IMR-90 (cell line): ENCODE measurements at regions of chr5 and their contacts with region 1.

Region 1: DNA sequence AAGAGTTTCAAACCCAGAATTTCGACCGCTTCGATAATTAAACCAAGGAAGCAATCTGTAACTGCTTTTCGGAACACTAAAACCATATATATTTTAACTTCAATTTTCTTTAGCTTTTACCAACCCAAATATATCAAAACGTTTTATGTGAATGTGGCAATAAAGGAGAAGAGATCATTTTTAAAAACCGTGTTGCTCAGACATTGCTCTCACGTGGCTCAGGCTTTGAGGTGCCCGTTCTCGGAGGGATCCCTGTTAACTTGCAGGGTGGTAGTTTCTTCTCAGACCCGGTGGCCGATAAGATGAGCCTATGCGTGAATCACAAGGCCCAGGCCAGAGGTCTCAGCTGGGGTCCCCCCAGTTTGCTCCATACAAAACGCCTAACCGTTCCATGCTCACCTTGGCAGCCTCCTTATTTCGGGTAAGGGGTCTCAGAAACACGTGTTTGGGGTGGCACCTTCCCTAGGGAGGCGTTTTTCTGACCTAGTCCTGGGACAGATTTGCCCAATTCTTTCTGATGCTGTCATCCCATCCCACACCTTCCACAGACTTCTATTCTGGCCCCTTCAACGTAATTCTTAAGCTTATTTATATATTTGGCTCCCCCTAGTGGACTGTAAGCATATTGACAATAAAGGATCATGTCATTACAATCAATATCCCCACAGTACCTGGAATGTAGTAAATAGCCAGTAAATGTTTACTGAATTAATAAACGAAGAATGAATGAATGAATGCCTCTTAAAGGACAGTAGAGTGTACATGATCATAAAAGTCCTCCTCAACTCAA is 48.1 kb downstream of the THBS4 start:
- DNase-seq: peak; percentile 72
- ATAC-seq: peak; percentile 83
- H3K4me3 ChIP-seq: no peak overlapping the region
- H3K27ac ChIP-seq: no peak overlapping the region
- H3K4me1 ChIP-seq: peaks cover 3% of the 10 kb centered on the region; the same call in 1 of the 2 replicates
- H3K27me3 ChIP-seq: peaks cover 2% of the 10 kb centered on the region; the same call in 1 of the 2 replicates
- CTCF ChIP-seq: peak; percentile 80
- POLR2A ChIP-seq: no peak
- RAD21 ChIP-seq: peak; percentile 69

Region 2: GRCh38 chr5:78908173-78909061 is 1174.9 kb before region 1 on chr5:
- CTCF ChIA-PET with region 1: no interaction called
- POLR2A ChIA-PET with region 1: no interaction called
- dilution Hi-C with region 1: no loop called
- in situ Hi-C with region 1: no loop called
- intact Hi-C with region 1: loop called (anchors 5 kb)
- DNase-seq: peak; percentile 91
- ATAC-seq: peak; percentile 40
- H3K4me3 ChIP-seq: peak overlapping the region; percentile 2; the same call in 1 of the 2 replicates
- H3K27ac ChIP-seq: peak overlapping the region; percentile 91
- H3K4me1 ChIP-seq: peaks cover 17% of the 10 kb centered on the region
- H3K27me3 ChIP-seq: no peaks in the 10 kb centered on the region
- CTCF ChIP-seq: no peak
- POLR2A ChIP-seq: no peak
- RAD21 ChIP-seq: no peak

Region 3: DNA sequence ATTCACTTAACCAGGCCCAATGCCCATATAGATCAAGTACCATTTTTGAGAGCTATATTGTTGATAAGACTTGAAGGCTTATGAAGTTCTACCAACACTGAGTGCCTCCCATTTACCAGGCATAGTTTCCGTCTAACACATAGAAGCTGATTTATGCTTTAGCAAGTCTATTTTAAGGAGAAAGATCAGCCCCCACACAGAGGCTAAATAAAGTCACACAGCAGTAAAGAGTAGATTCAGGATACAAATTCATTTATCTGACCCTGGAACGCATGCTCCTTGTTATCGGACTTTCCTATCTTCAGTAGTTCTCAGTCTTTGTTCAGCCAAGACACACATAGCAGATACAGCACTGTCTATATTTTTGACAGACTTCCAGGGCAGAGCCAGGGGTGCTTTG is 1048.1 kb before region 1 on chr5:
- CTCF ChIA-PET with region 1: no interaction called
- POLR2A ChIA-PET with region 1: no interaction called
- dilution Hi-C with region 1: no loop called
- in situ Hi-C with region 1: no loop called
- intact Hi-C with region 1: no loop called
- DNase-seq: no peak
- ATAC-seq: no peak
- H3K4me3 ChIP-seq: no peak overlapping the region
- H3K27ac ChIP-seq: no peak overlapping the region
- H3K4me1 ChIP-seq: no peaks in the 10 kb centered on the region
- H3K27me3 ChIP-seq: no peaks in the 10 kb centered on the region
- CTCF ChIP-seq: no peak
- POLR2A ChIP-seq: no peak
- RAD21 ChIP-seq: no peak

Region 4: GRCh38 chr5:79552984-79553383 is 530.3 kb before region 1 on chr5:
- CTCF ChIA-PET with region 1: no interaction called
- POLR2A ChIA-PET with region 1: no interaction called
- dilution Hi-C with region 1: no loop called
- in situ Hi-C with region 1: loop called (anchors 5 kb)
- intact Hi-C with region 1: no loop called
- DNase-seq: peak; percentile 46
- ATAC-seq: no peak
- H3K4me3 ChIP-seq: no peak overlapping the region
- H3K27ac ChIP-seq: no peak overlapping the region
- H3K4me1 ChIP-seq: no peaks in the 10 kb centered on the region
- H3K27me3 ChIP-seq: no peaks in the 10 kb centered on the region; the same call in none of the 2 replicates
- CTCF ChIP-seq: no peak
- POLR2A ChIP-seq: no peak
- RAD21 ChIP-seq: no peak

Region 5: GRCh38 chr5:79857714-79858409 is 225.4 kb before region 1 on chr5:
- CTCF ChIA-PET with region 1: interaction called, 5 read pairs
- POLR2A ChIA-PET with region 1: no interaction called
- dilution Hi-C with region 1: no loop called
- in situ Hi-C with region 1: no loop called
- intact Hi-C with region 1: loop called (anchors 2 kb)
- DNase-seq: peak; percentile 55
- ATAC-seq: peak; percentile 75
- H3K4me3 ChIP-seq: no peak overlapping the region
- H3K27ac ChIP-seq: no peak overlapping the region
- H3K4me1 ChIP-seq: no peaks in the 10 kb centered on the region
- H3K27me3 ChIP-seq: peaks cover 9% of the 10 kb centered on the region
- CTCF ChIP-seq: peak; percentile 86
- POLR2A ChIP-seq: no peak
- RAD21 ChIP-seq: peak; percentile 84

Region 6: DNA sequence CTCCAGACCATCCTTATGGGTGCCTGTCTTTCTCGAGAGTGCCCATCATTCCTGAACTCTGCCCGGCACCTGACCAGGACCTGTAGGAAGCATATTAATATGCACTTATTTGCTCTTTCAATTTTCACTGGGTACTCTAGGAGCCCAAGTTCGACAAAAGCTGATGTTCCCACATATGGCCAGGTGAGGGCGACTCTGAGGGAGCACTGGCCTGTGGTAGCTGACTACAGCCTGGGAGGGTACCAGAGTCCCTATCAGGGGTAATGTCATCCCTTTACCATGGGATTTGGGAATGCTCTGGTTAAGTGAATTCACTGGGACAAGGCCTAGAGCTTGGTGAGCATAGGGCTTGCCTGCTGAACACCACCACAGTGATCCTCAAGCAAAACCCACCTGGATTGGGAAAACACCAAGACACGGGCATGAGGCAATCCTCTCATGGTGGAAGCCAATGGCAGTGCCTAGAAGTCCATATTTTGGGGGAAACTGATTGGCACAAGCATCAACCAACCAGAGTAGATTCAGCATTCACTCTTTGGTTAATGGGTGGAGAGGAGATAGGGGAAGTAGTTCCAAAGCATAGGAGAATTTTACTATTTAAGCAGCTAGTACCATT is 204.5 kb before region 1 on chr5:
- CTCF ChIA-PET with region 1: interaction called, 4 read pairs
- POLR2A ChIA-PET with region 1: no interaction called
- dilution Hi-C with region 1: no loop called
- in situ Hi-C with region 1: no loop called
- intact Hi-C with region 1: loop called (anchors 2 kb)
- DNase-seq: no peak
- ATAC-seq: peak; percentile 57; the same call in 1 of the 2 replicates
- H3K4me3 ChIP-seq: no peak overlapping the region
- H3K27ac ChIP-seq: no peak overlapping the region
- H3K4me1 ChIP-seq: no peaks in the 10 kb centered on the region
- H3K27me3 ChIP-seq: peaks cover 8% of the 10 kb centered on the region; the same call in 1 of the 2 replicates
- CTCF ChIP-seq: peak; percentile 29; the same call in 1 of the 2 replicates
- POLR2A ChIP-seq: no peak
- RAD21 ChIP-seq: no peak

Region 7: DNA sequence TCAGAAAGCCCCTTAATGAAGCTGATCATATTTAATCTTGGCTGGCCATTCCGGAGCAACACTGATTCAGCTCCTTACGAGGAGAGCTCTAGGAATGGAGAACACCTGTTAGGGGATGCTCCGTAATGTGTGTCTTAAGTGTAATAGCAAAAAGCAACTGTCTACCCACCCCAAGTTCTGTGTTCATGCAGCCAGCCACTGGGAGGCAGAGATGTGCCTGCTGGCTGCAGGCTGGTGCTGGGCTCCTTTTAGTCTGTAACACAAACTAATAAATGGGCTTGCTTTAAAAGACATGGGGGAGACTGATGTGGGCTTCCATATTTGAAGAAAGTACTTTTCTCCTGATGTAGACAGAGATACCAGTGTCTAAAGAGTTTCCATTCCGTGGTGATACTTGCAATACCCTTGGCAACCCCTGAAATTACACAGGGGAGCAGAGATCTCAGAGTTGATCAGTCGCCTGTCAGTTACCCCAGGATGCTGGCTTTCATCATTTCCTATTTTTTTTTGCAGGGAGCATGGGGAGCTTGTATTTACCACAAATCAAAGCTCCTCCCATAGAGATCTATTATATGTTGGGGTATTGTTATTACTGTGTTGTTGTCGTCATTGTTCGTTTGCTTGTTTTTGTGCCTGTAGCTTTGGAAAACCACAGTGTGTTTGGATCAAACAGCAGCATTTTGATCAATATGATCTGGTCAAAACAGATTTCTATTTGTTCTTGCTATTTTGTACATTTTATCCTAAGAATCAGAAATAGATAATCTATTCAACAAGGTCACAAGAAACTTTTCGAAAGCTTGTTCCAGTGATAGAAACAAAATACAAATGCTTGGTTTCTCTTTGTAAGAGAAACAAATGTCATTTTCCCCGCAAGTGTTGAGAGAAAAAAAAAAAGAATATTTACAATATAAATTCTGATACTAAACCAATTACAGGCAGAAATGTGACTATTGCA is 158.1 kb before region 1 on chr5:
- CTCF ChIA-PET with region 1: interaction called, 8 read pairs
- POLR2A ChIA-PET with region 1: no interaction called
- dilution Hi-C with region 1: no loop called
- in situ Hi-C with region 1: no loop called
- intact Hi-C with region 1: loop called (anchors 1 kb)
- DNase-seq: peak; percentile 41
- ATAC-seq: peak; percentile 75
- H3K4me3 ChIP-seq: no peak overlapping the region
- H3K27ac ChIP-seq: no peak overlapping the region
- H3K4me1 ChIP-seq: no peaks in the 10 kb centered on the region
- H3K27me3 ChIP-seq: peaks cover 12% of the 10 kb centered on the region
- CTCF ChIP-seq: peak; percentile 46
- POLR2A ChIP-seq: no peak
- RAD21 ChIP-seq: peak; percentile 50

Region 8: GRCh38 chr5:80153586-80154126 is 70.4 kb after region 1 on chr5:
- CTCF ChIA-PET with region 1: no interaction called
- POLR2A ChIA-PET with region 1: no interaction called
- dilution Hi-C with region 1: no loop called
- in situ Hi-C with region 1: no loop called
- intact Hi-C with region 1: no loop called
- DNase-seq: no peak
- ATAC-seq: no peak
- H3K4me3 ChIP-seq: no peak overlapping the region
- H3K27ac ChIP-seq: no peak overlapping the region
- H3K4me1 ChIP-seq: peaks cover 3% of the 10 kb centered on the region; the same call in 1 of the 2 replicates
- H3K27me3 ChIP-seq: no peaks in the 10 kb centered on the region
- CTCF ChIP-seq: no peak
- POLR2A ChIP-seq: no peak
- RAD21 ChIP-seq: no peak